Activated naive CD4-positive, alpha-beta T cell treated with anti-CD3 and anti-CD28 coated beads for 36 hours (primary cell): ENCODE measurements at regions of chr5 and their contacts with region 1.

Region 1: GRCh38 chr5:72556351-72557166 is 49.3 kb upstream of the ZNF366 start:
- DNase-seq: peak; percentile 46
- H3K4me3 Mint-ChIP-seq: peak overlapping the region; percentile 59
- H3K27ac Mint-ChIP-seq: no peak overlapping the region
- H3K4me1 Mint-ChIP-seq: peaks cover 25% of the 10 kb centered on the region
- H3K27me3 Mint-ChIP-seq: peaks cover 50% of the 10 kb centered on the region

Region 2: GRCh38 chr5:71522151-71522550 is 1034.4 kb before region 1 on chr5:
- CTCF ChIA-PET with region 1: no interaction called
- intact Hi-C with region 1: no loop called
- DNase-seq: no peak
- H3K4me3 Mint-ChIP-seq: no peak overlapping the region
- H3K27ac Mint-ChIP-seq: no peak overlapping the region
- H3K4me1 Mint-ChIP-seq: no peaks in the 10 kb centered on the region
- H3K27me3 Mint-ChIP-seq: no peaks in the 10 kb centered on the region

Region 3: DNA sequence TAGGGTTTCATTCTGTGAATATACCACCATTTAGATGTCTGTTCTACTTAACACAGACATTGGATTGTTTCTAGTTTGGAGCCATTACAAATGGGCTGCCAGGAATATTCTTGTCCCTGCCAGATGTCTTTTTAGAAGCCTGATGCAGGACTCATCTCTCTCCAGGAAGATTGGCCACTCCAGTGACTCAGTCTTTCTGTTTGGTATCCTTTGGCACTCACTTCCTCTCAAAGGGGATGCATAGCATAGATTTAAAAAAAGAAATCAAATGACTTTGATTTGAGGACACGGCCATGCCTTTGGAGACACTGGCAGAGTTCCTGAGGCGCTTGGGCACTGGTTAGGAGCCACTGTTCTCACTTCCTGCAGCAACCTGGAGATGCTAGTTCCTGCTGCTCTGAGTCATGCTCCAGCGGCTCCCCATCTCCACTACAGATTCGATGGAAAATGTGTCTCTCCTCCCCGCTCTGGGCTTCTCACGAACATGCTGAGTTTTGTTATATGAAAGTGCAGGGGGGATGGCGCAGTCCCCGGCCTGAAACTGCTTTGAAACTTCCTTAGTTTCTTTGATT is 45.9 kb before region 1 on chr5:
- CTCF ChIA-PET with region 1: no interaction called
- intact Hi-C with region 1: loop called (anchors 2 kb)
- DNase-seq: no peak
- H3K4me3 Mint-ChIP-seq: no peak overlapping the region
- H3K27ac Mint-ChIP-seq: no peak overlapping the region
- H3K4me1 Mint-ChIP-seq: peaks cover 2% of the 10 kb centered on the region
- H3K27me3 Mint-ChIP-seq: peaks cover 42% of the 10 kb centered on the region

Region 4: GRCh38 chr5:72531496-72532190 is 24.9 kb before region 1 on chr5:
- CTCF ChIA-PET with region 1: no interaction called
- intact Hi-C with region 1: no loop called
- DNase-seq: no peak
- H3K4me3 Mint-ChIP-seq: no peak overlapping the region
- H3K27ac Mint-ChIP-seq: no peak overlapping the region
- H3K4me1 Mint-ChIP-seq: no peaks in the 10 kb centered on the region
- H3K27me3 Mint-ChIP-seq: peaks cover 20% of the 10 kb centered on the region

Region 5: GRCh38 chr5:72584466-72584865 is 27.9 kb after region 1 on chr5:
- CTCF ChIA-PET with region 1: no interaction called
- intact Hi-C with region 1: loop called (anchors 2 kb)
- DNase-seq: no peak
- H3K4me3 Mint-ChIP-seq: no peak overlapping the region
- H3K27ac Mint-ChIP-seq: no peak overlapping the region
- H3K4me1 Mint-ChIP-seq: no peaks in the 10 kb centered on the region
- H3K27me3 Mint-ChIP-seq: peaks cover 14% of the 10 kb centered on the region

Region 6: DNA sequence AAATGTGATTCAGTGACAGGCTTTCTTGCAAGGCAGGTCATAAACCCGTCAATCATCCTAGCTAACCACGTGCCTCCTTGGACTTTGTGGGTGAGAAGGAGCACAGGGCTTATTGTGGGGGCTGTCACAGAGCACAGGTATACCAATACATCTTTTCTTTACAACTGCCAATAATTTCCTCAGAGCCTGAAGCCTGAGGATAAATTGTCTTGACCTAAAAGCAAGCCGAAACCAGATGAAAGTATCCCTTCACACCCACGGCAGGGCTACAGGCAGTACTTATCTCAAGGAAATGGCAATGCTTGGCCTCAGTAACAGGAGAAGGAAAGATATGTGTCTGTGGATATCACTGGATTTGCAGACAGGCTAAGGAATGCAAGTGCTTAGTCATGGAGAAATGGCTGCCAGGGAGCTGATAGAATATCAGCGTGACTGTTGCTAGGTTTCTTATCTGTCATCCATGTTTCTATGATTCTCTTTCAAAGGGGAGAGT is 40.9 kb after region 1 on chr5:
- CTCF ChIA-PET with region 1: no interaction called
- intact Hi-C with region 1: no loop called
- DNase-seq: no peak
- H3K4me3 Mint-ChIP-seq: no peak overlapping the region
- H3K27ac Mint-ChIP-seq: no peak overlapping the region
- H3K4me1 Mint-ChIP-seq: peaks cover 3% of the 10 kb centered on the region
- H3K27me3 Mint-ChIP-seq: peaks cover 4% of the 10 kb centered on the region